PC-9 (cell line): ENCODE measurements at regions of chr11 and their contacts with region 1.

Region 1: DNA sequence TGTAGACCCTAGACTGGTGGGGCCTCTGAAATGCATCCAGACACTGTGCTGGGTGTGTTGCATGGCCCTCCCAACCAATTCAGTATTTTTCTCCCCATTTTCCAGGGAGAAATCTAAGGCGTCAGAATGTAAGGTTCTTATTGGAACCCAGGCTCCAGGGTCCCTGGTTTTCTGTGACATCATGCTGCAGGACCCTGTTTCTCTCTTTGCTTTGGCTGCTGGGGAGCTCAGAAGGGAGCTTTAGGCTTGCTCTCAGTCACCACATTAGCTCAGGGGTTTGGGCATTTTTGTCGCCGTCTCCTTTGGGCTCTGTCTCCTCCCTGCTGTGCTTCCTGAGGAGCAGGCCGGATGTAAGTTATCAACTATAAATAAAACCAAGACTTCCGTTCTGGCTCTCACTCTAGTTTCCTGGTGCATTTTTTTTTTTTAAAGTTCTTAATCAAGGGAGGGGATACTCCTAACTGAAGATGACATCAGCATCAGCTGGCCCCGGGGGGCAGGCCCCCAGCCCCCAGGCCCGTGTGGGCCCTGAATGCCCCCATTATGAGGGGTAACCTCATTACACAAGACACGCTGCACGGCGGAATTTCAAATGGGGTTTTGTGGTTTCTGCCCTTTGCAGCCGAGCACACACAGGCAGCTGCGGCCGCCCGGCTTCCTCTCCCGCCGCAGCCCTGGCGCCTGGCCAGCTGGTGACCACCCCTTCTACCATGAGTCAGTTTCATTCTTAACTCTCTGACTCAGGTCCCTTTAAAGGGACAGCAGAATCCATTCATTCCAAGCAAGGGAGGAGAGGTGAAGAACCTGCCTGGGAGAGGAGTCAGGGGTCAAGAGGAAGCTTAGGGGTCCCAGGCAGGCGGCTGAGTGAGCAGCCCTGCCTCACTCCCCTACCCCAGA is 3.2 kb downstream of the MYEOV start:
- DNase-seq: peak; percentile 99
- H3K4me3 ChIP-seq: peak overlapping the region; percentile 97
- H3K27ac ChIP-seq: peak overlapping the region; percentile 98
- H3K4me1 ChIP-seq: peaks cover 55% of the 10 kb centered on the region
- H3K27me3 ChIP-seq: no peaks in the 10 kb centered on the region
- CTCF ChIP-seq: no peak

Region 2: GRCh38 chr11:69131644-69132300 is 165.4 kb before region 1 on chr11:
- CTCF ChIA-PET with region 1: interaction called, 11 read pairs
- POLR2A ChIA-PET with region 1: interaction called, 10 read pairs
- intact Hi-C with region 1: no loop called
- DNase-seq: peak; percentile 84 to 88
- H3K4me3 ChIP-seq: no peak overlapping the region
- H3K27ac ChIP-seq: peak overlapping the region; percentile 26; the same call in 1 of the 2 replicates
- H3K4me1 ChIP-seq: peaks cover 22% of the 10 kb centered on the region
- H3K27me3 ChIP-seq: no peaks in the 10 kb centered on the region
- CTCF ChIP-seq: peak; percentile 98

Region 3: GRCh38 chr11:69280994-69281393 is 16.1 kb before region 1 on chr11:
- CTCF ChIA-PET with region 1: interaction called, 3 read pairs
- POLR2A ChIA-PET with region 1: interaction called, 16 read pairs
- intact Hi-C with region 1: loop called (anchors 1 kb)
- DNase-seq: peak; percentile 90 to 100
- H3K4me3 ChIP-seq: peak overlapping the region; percentile 28; the same call in 1 of the 2 replicates
- H3K27ac ChIP-seq: peak overlapping the region; percentile 99
- H3K4me1 ChIP-seq: peaks cover 85% of the 10 kb centered on the region
- H3K27me3 ChIP-seq: no peaks in the 10 kb centered on the region
- CTCF ChIP-seq: 0 out of 2 replicates have a peak, but pooled peaks have one; percentile 3

Region 4: DNA sequence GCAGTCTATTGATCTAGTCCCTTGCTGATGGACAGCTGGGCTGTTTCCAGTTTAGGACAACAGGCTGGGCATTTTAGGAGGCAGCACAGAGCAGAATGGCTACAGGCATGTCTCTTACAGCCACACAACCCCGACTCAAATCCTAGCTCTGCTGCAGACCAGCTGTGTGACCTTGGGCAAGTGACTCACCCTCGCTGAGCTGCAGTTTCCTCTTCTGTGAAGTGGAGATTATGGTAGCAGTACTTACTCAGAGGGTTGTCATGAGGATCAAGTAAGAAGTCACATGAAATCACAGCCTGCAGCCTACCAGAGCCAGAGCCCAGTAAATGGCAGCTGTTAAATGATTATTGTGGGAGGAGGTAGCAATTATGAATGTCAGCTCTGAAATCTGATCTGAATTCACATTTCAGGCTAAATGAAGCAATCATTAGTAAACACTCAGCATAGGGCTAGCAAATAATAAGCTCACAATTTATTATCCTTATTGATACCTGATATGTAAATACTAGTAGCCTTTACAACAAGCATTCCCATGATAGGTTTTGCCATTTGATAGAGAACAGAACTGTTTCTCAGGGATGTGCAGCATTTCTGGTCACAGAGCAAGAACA is 55.7 kb after region 1 on chr11:
- CTCF ChIA-PET with region 1: no interaction called
- POLR2A ChIA-PET with region 1: interaction called, 4 read pairs
- intact Hi-C with region 1: loop called (anchors 5 kb)
- DNase-seq: peak in 1 of 2 experiments; percentile 91
- H3K4me3 ChIP-seq: no peak overlapping the region
- H3K27ac ChIP-seq: peak overlapping the region; percentile 73
- H3K4me1 ChIP-seq: peaks cover 51% of the 10 kb centered on the region
- H3K27me3 ChIP-seq: no peaks in the 10 kb centered on the region
- CTCF ChIP-seq: no peak

Region 5: DNA sequence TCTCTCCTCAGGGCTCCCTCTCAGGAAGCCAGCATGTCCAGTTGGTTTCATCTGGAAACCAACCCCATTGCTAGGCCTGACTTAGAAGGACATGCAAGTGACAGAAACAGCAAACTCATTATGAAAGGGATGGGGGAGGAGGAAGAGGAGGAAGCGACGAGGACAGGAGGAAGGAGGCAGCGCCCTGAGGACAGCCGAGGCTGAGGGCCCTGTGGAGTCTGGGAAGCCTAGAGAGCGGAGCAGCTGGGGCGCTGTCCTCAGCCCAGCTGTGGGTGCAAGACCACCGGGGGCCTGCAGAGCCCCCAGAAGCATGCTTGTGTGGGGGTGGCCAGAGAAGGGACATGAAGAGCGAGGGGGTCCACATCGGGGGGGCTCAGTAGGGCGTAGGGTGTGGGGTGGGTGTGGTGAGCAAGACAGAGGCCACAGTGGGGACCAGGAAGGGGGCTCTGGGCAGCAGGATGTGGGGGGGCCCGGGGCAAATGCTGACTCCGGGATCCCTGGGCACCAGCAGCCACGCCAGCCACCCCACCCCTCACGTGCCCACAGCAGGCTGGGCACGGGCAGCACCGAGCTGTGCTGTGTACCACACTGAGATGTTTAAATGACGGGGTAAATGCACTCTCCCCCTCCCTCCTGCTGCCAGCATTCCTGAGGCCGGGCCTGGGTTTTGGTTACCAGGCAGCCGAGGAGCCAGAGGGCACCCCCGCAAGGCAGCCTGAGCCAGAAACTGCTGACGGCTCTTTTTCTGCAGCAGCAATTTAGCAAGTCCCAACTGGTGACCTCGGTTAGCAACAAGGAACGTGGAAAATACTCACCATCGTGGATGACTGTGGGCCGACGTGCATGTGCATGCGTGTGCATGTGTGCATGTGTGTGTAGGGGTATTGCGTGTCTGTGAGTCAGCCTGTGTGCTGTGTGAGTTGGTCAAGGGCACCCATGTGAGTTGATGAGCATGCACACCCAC is 101.7 kb after region 1 on chr11:
- CTCF ChIA-PET with region 1: no interaction called
- POLR2A ChIA-PET with region 1: no interaction called
- intact Hi-C with region 1: no loop called
- DNase-seq: no peak
- H3K4me3 ChIP-seq: no peak overlapping the region
- H3K27ac ChIP-seq: no peak overlapping the region
- H3K4me1 ChIP-seq: peaks cover 6% of the 10 kb centered on the region
- H3K27me3 ChIP-seq: no peaks in the 10 kb centered on the region
- CTCF ChIP-seq: no peak

Region 6: GRCh38 chr11:69443138-69443967 is 146.2 kb after region 1 on chr11:
- CTCF ChIA-PET with region 1: no interaction called
- POLR2A ChIA-PET with region 1: interaction called, 4 read pairs
- intact Hi-C with region 1: loop called (anchors 1 kb)
- DNase-seq: peak; percentile 90 to 97
- H3K4me3 ChIP-seq: peak overlapping the region; percentile 58
- H3K27ac ChIP-seq: peak overlapping the region; percentile 88
- H3K4me1 ChIP-seq: peaks cover 56% of the 10 kb centered on the region
- H3K27me3 ChIP-seq: no peaks in the 10 kb centered on the region
- CTCF ChIP-seq: no peak

Region 7: DNA sequence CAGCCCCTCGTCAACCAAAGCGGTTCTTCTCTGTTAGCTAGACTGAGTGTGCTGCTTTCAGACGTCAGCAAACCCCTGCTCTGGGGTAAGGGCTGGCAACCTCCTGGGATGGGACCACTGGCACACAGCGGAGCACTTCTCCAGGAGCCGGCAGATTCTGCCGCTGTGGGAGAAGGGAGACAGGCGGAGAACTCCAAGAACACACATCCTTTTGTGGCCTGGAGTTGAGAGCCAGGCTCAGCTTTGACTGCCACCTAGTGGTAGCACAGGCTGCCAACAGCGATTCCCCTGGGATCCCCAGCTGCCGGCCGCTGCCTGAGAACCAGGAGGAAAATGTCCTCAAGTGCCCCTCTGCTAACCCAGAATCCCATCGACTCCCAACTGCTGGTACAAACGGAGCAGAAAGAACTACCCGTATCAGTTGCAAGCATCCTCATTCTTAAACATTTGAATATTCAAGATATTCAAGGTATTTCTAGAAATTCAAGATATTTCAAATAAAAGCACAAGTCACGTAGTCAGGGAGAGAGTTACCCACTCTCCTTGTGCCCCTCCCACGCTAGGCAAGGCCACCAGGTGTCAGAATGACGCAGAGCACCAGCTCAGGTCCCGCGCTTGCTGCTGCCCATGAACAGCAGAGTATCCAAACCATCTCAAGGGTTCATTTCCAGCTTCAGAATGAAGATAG is 373.2 kb after region 1 on chr11:
- CTCF ChIA-PET with region 1: no interaction called
- POLR2A ChIA-PET with region 1: interaction called, 3 read pairs
- intact Hi-C with region 1: loop called (anchors 10 kb)
- DNase-seq: peak; percentile 65 to 83
- H3K4me3 ChIP-seq: no peak overlapping the region
- H3K27ac ChIP-seq: no peak overlapping the region
- H3K4me1 ChIP-seq: peaks cover 14% of the 10 kb centered on the region
- H3K27me3 ChIP-seq: no peaks in the 10 kb centered on the region
- CTCF ChIP-seq: peak; percentile 97